Activated T-helper 1 cell treated with anti-CD3 and anti-CD28 coated beads, Interleukin-12 subunit alpha, Interleukin-12 subunit beta, Interleukin-2, Interleukin-4 antibody, amounts not matched to agents 30 ng/mL and 10 ng/mL and 1 ng/mL, durations not matched to agents 14 hours and 24 hours and 36 hours (primary cell): ENCODE measurements at regions of chr10 and their contacts with region 1.

Region 1: GRCh38 chr10:96831867-96832720 is at the start of gene LCOR:
- DNase-seq: peak; percentile 76
- H3K4me3 Mint-ChIP-seq: peak within 1 kb of the TSS; percentile 89
- H3K27ac Mint-ChIP-seq: peak within 1 kb of the TSS; percentile 96
- H3K4me1 Mint-ChIP-seq: peaks cover 53% of the 10 kb centered on the region
- H3K27me3 Mint-ChIP-seq: peaks cover 2% of the 10 kb centered on the region
- total RNA-seq, gene LCOR: 26.2 and 31.9 TPM in 2 replicates

Region 2: GRCh38 chr10:96374985-96375830 is 456.9 kb before region 1 on chr10:
- intact Hi-C with region 1: loop called (anchors 5 kb)
- DNase-seq: peak; percentile 60
- H3K4me3 Mint-ChIP-seq: peak overlapping the region; percentile 74
- H3K27ac Mint-ChIP-seq: no peak overlapping the region
- H3K4me1 Mint-ChIP-seq: peaks cover 18% of the 10 kb centered on the region
- H3K27me3 Mint-ChIP-seq: peaks cover 13% of the 10 kb centered on the region

Region 3: GRCh38 chr10:96642973-96643372 is 189.1 kb before region 1 on chr10:
- intact Hi-C with region 1: loop called (anchors 1 kb)
- DNase-seq: peak; percentile 28
- H3K4me3 Mint-ChIP-seq: no peak overlapping the region
- H3K27ac Mint-ChIP-seq: no peak overlapping the region
- H3K4me1 Mint-ChIP-seq: peaks cover 28% of the 10 kb centered on the region
- H3K27me3 Mint-ChIP-seq: no peaks in the 10 kb centered on the region

Region 4: DNA sequence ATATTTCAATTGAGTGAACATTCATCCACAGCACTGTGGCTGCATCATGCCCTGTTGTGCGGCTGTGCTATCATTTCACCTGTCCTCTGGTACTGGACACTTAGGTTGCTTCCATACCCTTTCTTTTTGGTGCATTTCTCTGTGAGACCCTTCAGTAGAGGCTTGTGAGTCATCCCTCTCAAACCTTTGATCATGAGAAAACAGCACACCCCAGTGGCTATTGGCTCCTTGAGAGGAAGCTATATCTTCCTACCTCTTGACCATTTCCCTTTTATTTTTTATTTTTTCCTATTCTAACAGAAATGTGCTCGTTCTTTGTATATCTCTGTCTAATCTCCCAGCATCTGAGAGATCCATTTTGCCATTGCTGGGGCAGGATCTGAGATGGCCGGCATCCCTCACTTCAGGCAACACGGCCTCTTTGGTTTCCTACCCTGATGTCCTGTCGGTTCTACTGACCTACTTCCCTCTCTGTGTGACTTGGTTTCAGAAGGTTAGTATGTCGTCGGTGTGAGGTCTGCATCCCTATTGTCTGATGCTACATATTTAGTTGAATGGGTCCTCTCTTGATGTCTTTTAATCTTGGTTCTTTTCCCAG is 88.0 kb before region 1 on chr10:
- intact Hi-C with region 1: no loop called
- DNase-seq: no peak
- H3K4me3 Mint-ChIP-seq: no peak overlapping the region
- H3K27ac Mint-ChIP-seq: no peak overlapping the region
- H3K4me1 Mint-ChIP-seq: peaks cover 11% of the 10 kb centered on the region
- H3K27me3 Mint-ChIP-seq: peaks cover 8% of the 10 kb centered on the region

Region 5: GRCh38 chr10:96789571-96790108 is 42.5 kb before region 1 on chr10:
- intact Hi-C with region 1: loop called (anchors 1 kb)
- DNase-seq: peak; percentile 33
- H3K4me3 Mint-ChIP-seq: no peak overlapping the region
- H3K27ac Mint-ChIP-seq: no peak overlapping the region
- H3K4me1 Mint-ChIP-seq: no peaks in the 10 kb centered on the region
- H3K27me3 Mint-ChIP-seq: peaks cover 12% of the 10 kb centered on the region

Region 6: GRCh38 chr10:96863922-96864543 is 31.9 kb after region 1 on chr10:
- intact Hi-C with region 1: no loop called
- DNase-seq: no peak
- H3K4me3 Mint-ChIP-seq: no peak overlapping the region
- H3K27ac Mint-ChIP-seq: peak overlapping the region; percentile 70
- H3K4me1 Mint-ChIP-seq: peaks cover 20% of the 10 kb centered on the region
- H3K27me3 Mint-ChIP-seq: no peaks in the 10 kb centered on the region

Region 7: DNA sequence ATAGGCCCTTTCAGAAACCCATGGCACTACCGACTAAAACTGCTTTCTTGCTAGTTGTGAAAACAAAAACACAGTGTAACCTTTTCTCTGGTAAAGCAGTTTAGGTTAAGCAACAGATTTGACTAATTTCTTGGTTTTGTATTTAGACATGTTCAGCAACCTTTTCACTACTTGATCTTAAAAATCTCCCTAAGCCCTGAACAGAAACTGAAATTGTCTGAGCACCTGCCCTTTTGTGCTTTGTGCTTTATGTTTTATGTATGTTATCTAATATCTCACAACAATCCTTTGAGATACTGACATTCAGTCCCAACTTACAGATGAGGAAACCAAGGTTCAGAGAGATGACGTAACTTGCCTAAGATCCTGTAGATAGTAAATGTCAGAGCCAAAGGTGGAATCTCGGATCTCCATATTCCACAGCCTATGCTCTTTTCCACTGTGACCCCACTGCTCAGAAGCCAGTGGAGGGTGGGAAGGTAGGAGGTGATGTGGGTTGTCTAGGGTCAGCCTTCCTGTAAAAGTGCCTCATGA is 146.6 kb after region 1 on chr10:
- intact Hi-C with region 1: loop called (anchors 2 kb)
- DNase-seq: no peak
- H3K4me3 Mint-ChIP-seq: peak overlapping the region; percentile 62
- H3K27ac Mint-ChIP-seq: peak overlapping the region; percentile 88
- H3K4me1 Mint-ChIP-seq: peaks cover 25% of the 10 kb centered on the region
- H3K27me3 Mint-ChIP-seq: no peaks in the 10 kb centered on the region

Region 8: DNA sequence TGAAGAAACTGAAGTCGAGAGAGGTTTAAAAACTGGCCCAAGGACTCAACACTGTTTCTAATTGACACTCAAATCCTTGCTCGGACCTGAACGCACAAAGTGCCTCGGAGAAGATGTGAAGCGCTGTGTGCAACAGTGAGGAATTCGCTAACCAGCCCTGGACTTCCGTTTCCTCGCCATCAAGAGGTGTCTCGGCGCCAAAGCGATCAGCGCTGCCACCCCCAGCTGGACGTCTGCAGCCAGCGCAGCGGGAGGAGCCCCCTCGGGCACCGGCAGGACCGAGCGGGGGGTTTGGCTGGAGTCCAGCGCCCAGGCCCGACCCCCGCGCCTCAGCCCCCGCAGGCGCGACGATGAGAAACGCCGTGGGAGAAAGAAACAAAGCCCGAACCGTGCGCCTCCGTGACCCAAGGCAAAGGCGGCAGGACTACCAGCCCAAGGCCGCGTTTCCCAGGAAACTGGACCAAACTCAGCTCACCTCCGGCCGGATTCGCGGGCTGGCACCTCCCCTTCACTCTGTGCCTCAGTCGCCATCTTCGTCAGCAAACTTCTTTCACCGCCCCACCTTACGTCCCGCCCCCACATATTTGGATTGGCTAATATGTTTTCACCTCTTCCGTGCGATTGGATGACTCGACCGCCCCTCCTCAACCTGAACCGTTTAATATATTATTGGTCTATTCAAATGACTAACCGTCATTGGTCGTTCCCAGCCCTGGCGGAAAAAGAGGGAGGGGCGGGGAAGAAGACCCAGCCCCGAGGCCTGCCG is 460.2 kb after region 1 on chr10 and contains the start of gene ARHGAP19:
- intact Hi-C with region 1: loop called (anchors 10 kb)
- DNase-seq: peak; percentile 92
- H3K4me3 Mint-ChIP-seq: peak within 1 kb of the TSS; percentile 91
- H3K27ac Mint-ChIP-seq: peak within 1 kb of the TSS; percentile 92
- H3K4me1 Mint-ChIP-seq: peaks cover 22% of the 10 kb centered on the region
- H3K27me3 Mint-ChIP-seq: peaks cover 3% of the 10 kb centered on the region
- total RNA-seq, gene ARHGAP19: 27.1 and 27.8 TPM in 2 replicates

Region 9: DNA sequence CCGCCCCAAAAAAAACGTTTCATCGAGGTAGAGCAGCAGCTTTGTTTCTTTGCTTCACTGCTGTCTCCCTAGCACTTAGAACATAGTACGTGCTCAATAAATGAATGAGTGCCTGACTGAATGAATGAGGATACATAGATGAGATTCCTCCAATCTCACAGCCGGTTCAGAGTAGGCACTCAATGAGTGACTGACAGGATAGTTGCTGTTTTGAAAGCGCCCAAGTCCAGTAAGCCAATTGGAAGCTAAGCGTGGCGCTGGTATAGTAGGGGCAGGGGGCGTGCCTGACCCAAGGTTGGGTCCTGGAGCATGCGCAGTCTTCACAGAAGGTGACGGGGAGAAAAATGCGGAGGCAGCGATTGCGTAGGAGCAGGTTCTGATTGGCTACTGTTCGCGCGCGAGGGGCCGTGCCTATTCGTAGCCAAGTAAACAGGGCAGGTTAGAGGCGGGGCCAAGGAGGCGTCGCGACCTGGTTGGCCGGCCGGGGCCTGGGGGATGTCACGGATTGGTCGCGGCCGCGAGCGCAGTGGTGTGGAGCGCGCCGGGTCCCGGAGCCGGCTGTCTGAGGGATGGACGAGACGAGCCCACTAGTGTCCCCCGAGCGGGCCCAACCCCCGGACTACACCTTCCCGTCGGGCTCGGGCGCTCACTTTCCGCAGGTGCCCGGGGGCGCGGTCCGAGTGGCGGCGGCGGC is 808.2 kb after region 1 on chr10 and contains the start of gene PI4K2A:
- intact Hi-C with region 1: loop called (anchors 5 kb)
- DNase-seq: peak; percentile 99
- H3K4me3 Mint-ChIP-seq: peak within 1 kb of the TSS; percentile 96
- H3K27ac Mint-ChIP-seq: peak within 1 kb of the TSS; percentile 86
- H3K4me1 Mint-ChIP-seq: peaks cover 23% of the 10 kb centered on the region
- H3K27me3 Mint-ChIP-seq: peaks cover 1% of the 10 kb centered on the region
- total RNA-seq, gene PI4K2A: 19.3 and 19.7 TPM in 2 replicates